ENCODE measurements at regions of chr7 and their contacts with region 1.

Region 1: DNA sequence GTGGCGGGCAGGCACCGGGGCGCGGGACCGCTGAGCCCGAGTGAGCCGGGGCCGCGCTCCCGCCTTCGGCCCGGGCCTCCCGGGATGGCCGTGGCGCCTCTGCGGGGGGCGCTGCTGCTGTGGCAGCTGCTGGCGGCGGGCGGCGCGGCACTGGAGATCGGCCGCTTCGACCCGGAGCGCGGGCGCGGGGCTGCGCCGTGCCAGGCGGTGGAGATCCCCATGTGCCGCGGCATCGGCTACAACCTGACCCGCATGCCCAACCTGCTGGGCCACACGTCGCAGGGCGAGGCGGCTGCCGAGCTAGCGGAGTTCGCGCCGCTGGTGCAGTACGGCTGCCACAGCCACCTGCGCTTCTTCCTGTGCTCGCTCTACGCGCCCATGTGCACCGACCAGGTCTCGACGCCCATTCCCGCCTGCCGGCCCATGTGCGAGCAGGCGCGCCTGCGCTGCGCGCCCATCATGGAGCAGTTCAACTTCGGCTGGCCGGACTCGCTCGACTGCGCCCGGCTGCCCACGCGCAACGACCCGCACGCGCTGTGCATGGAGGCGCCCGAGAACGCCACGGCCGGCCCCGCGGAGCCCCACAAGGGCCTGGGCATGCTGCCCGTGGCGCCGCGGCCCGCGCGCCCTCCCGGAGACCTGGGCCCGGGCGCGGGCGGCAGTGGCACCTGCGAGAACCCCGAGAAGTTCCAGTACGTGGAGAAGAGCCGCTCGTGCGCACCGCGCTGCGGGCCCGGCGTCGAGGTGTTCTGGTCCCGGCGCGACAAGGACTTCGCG is 534 bp downstream of the FZD9 start:
- DNase-seq: peak; percentile 83
- H3K4me3 ChIP-seq: peak overlapping the region in 7 of 8 donors; percentile 32 to 73 (median 46)
- H3K27ac ChIP-seq: peak overlapping the region in 1 of 8 donors; percentile 31
- H3K4me1 ChIP-seq: peaks cover 0 to 39% (median 9%) of the 10 kb centered on the region in 6 donors
- H3K27me3 ChIP-seq: peaks cover 0 to 34% (median 8%) of the 10 kb centered on the region in 7 donors
- CTCF ChIP-seq: no peak
- POLR2A ChIP-seq: no peak

Region 2: GRCh38 chr7:73329861-73330581 is 104.1 kb before region 1 on chr7:
- intact Hi-C with region 1: loop called (anchors 10 kb)
- DNase-seq: no peak
- H3K4me3 ChIP-seq: no peak overlapping the region
- H3K27ac ChIP-seq: peak overlapping the region in 4 of 8 donors; percentile 57 to 76 (median 65)
- H3K4me1 ChIP-seq: peaks cover 0 to 10% (median 4%) of the 10 kb centered on the region in 6 donors
- H3K27me3 ChIP-seq: no peaks in the 10 kb centered on the region
- CTCF ChIP-seq: no peak
- POLR2A ChIP-seq: no peak